CD4-positive, alpha-beta memory T cell (primary cell): ENCODE measurements at regions of chr20 and their contacts with region 1.

Region 1: DNA sequence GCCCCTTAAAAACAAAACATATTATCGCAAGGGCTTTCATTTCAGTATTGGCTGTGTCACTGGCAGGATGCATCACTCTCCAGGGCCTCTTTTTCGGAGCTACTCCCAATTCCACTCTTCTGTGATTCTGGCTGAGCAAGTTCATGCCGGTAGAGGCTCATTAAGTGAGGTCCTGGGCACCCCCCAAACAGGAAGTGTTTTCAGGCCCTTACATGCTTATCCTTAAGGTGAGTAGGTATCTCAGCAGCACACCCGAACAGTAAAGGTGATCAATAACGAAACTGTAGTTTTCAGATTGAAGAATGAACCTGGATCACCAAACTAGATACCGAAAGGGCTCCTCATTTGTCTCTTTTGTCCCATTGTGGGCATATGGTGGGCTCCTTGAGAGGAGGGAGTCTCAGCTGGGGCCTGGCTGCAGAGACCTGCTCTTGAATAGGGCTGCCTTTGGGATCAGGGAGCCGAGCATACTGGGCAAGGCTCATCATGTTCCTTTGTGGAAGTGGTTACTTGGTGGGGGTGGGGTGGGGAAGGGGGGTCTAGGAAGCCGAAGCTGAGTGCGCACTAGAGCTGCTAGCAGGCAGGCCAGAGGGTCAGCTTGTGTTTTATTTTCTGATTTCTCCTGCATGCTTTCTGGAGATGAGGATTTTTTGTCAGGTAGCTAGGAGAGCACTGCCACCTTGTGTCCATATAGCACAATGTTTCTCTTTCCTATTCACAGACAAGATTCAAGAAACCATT is 65.2 kb downstream of the CDS2 start:
- DNase-seq: peak in 4 of 5 donors; percentile 55 to 62 (median 58)
- H3K4me3 ChIP-seq: no peak overlapping the region
- H3K4me3 Mint-ChIP-seq: no peak overlapping the region
- H3K27ac ChIP-seq: no peak overlapping the region
- H3K27ac Mint-ChIP-seq: peak overlapping the region; percentile 48 to 92 (median 86)
- H3K4me1 ChIP-seq: peaks cover 7% of the 10 kb centered on the region
- H3K4me1 Mint-ChIP-seq: peaks cover 2 to 8% (median 6%) of the 10 kb centered on the region in 4 donors
- H3K27me3 ChIP-seq: no peaks in the 10 kb centered on the region
- H3K27me3 Mint-ChIP-seq: no peaks in the 10 kb centered on the region

Region 2: DNA sequence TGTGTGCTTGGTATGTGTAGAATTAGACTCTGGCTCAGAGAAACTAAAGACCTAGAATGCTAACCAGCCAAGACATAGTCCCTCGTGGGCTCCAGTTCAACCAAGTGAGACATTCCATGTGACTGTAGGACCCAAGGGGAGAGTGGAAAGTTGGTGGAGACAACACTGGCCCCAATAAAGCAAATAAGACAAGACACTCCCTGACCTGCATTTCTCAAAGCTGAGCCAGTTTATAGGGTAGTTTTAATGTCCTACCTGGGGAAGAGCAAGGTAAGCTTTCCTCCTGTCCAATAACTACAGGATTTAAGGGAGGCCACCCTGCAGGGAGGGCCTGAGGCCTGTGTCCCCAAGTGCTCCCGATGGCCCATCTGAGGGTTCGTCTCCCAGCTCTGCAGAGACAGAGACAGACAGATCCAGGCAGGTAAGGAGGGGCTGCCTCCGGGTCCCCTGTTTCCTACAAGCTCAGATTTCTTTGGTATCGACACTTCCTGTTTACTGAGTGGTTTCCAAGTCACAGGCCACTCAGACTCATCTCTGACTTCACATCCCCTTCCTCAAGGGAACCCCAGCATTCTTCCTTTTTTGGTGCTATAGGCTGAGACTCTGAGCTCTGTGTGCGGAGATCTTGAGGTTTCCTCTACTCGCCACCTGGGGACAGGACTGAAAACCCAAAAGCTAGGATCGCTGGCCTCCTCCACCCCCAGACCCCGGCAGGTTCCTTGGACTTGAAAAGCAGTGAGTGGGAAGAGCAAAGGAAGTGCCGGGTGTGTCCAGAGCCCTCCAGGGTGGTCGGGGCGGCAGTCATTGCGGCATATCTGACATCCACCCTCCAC is 377.9 kb before region 1 on chr20:
- CTCF ChIA-PET with region 1: no interaction called
- POLR2A ChIA-PET with region 1: no interaction called
- intact Hi-C with region 1: loop called (anchors 5 kb)
- DNase-seq: peak; percentile 86 to 92 (median 88)
- H3K4me3 ChIP-seq: peak overlapping the region; percentile 40 to 89
- H3K4me3 Mint-ChIP-seq: peak overlapping the region; percentile 90 to 97 (median 94)
- H3K27ac ChIP-seq: peak overlapping the region; percentile 98
- H3K27ac Mint-ChIP-seq: peak overlapping the region; percentile 99 to 100 (median 100)
- H3K4me1 ChIP-seq: peaks cover 89% of the 10 kb centered on the region
- H3K4me1 Mint-ChIP-seq: peaks cover 66 to 87% (median 79%) of the 10 kb centered on the region in 4 donors
- H3K27me3 ChIP-seq: no peaks in the 10 kb centered on the region
- H3K27me3 Mint-ChIP-seq: no peaks in the 10 kb centered on the region

Region 3: GRCh38 chr20:5041433-5041832 is 150.6 kb before region 1 on chr20:
- CTCF ChIA-PET with region 1: no interaction called
- POLR2A ChIA-PET with region 1: no interaction called
- intact Hi-C with region 1: no loop called
- DNase-seq: no peak
- H3K4me3 ChIP-seq: no peak overlapping the region
- H3K4me3 Mint-ChIP-seq: no peak overlapping the region
- H3K27ac ChIP-seq: no peak overlapping the region
- H3K27ac Mint-ChIP-seq: no peak overlapping the region
- H3K4me1 ChIP-seq: peaks cover 4% of the 10 kb centered on the region
- H3K4me1 Mint-ChIP-seq: peaks cover 3 to 7% (median 5%) of the 10 kb centered on the region in 4 donors
- H3K27me3 ChIP-seq: no peaks in the 10 kb centered on the region
- H3K27me3 Mint-ChIP-seq: peaks cover 3 to 5% of the 10 kb centered on the region in 2 donors

Region 4: GRCh38 chr20:5056801-5057599 is 135.0 kb before region 1 on chr20:
- CTCF ChIA-PET with region 1: interaction called, 10 read pairs
- POLR2A ChIA-PET with region 1: no interaction called
- intact Hi-C with region 1: loop called (anchors 2 kb)
- DNase-seq: peak; percentile 69 to 78 (median 73)
- H3K4me3 ChIP-seq: no peak overlapping the region
- H3K4me3 Mint-ChIP-seq: peak overlapping the region in 7 of 8 donors; percentile 6 to 69 (median 46)
- H3K27ac ChIP-seq: no peak overlapping the region
- H3K27ac Mint-ChIP-seq: peak overlapping the region; percentile 48 to 96 (median 81)
- H3K4me1 ChIP-seq: peaks cover 19% of the 10 kb centered on the region
- H3K4me1 Mint-ChIP-seq: peaks cover 13 to 24% (median 20%) of the 10 kb centered on the region in 4 donors
- H3K27me3 ChIP-seq: no peaks in the 10 kb centered on the region
- H3K27me3 Mint-ChIP-seq: no peaks in the 10 kb centered on the region

Region 5: GRCh38 chr20:5146871-5147592 is 45.0 kb before region 1 on chr20:
- CTCF ChIA-PET with region 1: no interaction called
- POLR2A ChIA-PET with region 1: no interaction called
- intact Hi-C with region 1: no loop called
- DNase-seq: no peak
- H3K4me3 ChIP-seq: no peak overlapping the region
- H3K4me3 Mint-ChIP-seq: no peak overlapping the region
- H3K27ac ChIP-seq: no peak overlapping the region
- H3K27ac Mint-ChIP-seq: peak overlapping the region in 4 of 7 donors; percentile 12 to 50 (median 36)
- H3K4me1 ChIP-seq: peaks cover 30% of the 10 kb centered on the region
- H3K4me1 Mint-ChIP-seq: peaks cover 40 to 81% (median 57%) of the 10 kb centered on the region in 4 donors
- H3K27me3 ChIP-seq: no peaks in the 10 kb centered on the region
- H3K27me3 Mint-ChIP-seq: no peaks in the 10 kb centered on the region

Region 6: DNA sequence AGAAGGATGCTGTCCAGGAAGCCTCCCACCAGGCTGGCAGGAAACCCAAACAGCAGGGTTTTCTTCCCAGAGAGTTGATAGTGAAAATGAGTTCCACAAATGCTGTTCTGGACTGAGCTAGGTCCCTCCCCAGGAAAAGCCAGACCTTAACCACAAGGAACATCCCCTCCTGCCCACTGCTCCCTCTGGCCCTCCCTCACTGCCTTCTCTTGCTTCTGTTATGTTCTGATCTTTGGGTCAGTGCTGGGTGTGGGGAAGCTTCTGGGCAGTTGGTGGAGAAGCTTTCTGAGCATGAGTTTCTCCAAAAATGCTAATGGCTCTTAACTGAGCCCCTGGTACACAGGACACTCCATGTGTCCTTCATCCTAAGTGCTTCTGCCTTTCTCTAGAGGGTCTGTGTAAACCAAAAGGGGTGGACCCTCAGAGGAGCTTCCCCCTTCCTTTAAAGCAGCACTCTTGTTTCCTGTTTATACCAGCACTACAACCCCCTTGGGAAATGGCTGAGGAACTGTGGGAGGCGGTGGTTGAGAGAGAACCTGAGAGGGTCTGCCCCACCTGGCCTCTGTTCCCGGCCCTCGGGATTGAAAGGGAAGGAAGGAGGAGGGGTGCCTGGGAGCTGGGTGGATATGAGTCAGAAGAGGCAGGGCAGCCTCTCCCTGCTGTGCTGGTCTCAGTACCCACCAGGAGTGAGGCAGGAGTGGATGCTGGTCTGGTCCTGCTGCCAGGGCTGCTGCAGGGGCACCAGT is 23.2 kb before region 1 on chr20:
- CTCF ChIA-PET with region 1: interaction called, 12 read pairs
- POLR2A ChIA-PET with region 1: interaction called, 3 read pairs
- intact Hi-C with region 1: no loop called
- DNase-seq: no peak
- H3K4me3 ChIP-seq: no peak overlapping the region
- H3K4me3 Mint-ChIP-seq: peak overlapping the region in 5 of 8 donors; percentile 40 to 62 (median 52)
- H3K27ac ChIP-seq: no peak overlapping the region
- H3K27ac Mint-ChIP-seq: peak overlapping the region; percentile 67 to 93 (median 86)
- H3K4me1 ChIP-seq: peaks cover 45% of the 10 kb centered on the region
- H3K4me1 Mint-ChIP-seq: peaks cover 43 to 78% (median 60%) of the 10 kb centered on the region in 4 donors
- H3K27me3 ChIP-seq: no peaks in the 10 kb centered on the region
- H3K27me3 Mint-ChIP-seq: no peaks in the 10 kb centered on the region

Region 7: DNA sequence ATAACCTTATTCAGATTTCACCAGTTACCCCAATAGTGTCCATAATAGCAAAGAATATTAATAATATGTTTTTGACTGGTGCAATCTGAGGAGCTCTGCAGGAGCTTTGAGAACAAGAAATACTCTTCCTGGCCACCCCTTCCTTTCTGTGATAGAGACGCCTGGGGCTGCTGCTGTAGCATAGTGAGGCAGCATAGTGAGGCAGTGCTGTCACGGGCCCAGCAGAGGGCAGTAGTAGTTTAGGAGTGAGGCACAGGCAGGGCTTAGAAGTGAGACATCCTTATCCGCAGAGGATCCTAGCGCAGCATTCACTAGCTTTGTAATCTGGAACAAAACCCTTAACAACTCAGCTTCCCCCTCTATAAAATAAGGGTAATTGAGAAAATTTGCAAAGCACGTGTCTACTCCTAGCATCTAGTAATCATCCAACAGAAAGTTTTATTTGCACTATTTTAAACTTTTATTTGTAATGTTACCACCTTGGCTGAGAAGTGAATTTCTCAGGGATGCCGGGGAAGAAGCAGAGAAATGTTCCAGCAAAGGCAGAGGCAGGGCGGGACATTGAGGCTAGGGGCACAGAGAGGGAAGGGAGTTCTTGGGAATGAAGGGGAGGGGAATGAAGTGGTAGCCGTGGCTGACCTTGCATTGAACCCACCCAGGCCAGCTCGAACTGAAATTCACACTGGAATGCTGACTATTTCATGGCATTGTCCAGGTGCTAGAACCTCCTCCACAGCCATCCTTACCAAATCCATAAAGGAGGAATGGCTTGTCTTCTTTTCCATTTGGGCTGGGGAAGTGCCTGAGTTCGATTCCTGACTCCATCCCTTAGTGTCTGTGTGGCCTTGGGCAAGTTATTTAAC is 13.6 kb after region 1 on chr20:
- CTCF ChIA-PET with region 1: interaction called, 39 read pairs
- POLR2A ChIA-PET with region 1: no interaction called
- intact Hi-C with region 1: no loop called
- DNase-seq: peak; percentile 49 to 64 (median 56)
- H3K4me3 ChIP-seq: no peak overlapping the region
- H3K4me3 Mint-ChIP-seq: no peak overlapping the region
- H3K27ac ChIP-seq: no peak overlapping the region
- H3K27ac Mint-ChIP-seq: peak overlapping the region in 1 of 7 donors; percentile 74
- H3K4me1 ChIP-seq: no peaks in the 10 kb centered on the region
- H3K4me1 Mint-ChIP-seq: peaks cover 0 to 6% (median 0%) of the 10 kb centered on the region in 4 donors
- H3K27me3 ChIP-seq: no peaks in the 10 kb centered on the region
- H3K27me3 Mint-ChIP-seq: no peaks in the 10 kb centered on the region